ENCODE measurements at regions of chr1 and their contacts with region 1.

Region 1: GRCh38 chr1:204506961-204507387 is 9.2 kb upstream of the MDM4 start:
- DNase-seq: peak; percentile 91
- H3K4me3 ChIP-seq: peak overlapping the region; percentile 74
- H3K27ac ChIP-seq: peak overlapping the region; percentile 88
- H3K4me1 ChIP-seq: peaks cover 4% of the 10 kb centered on the region; the same call in 1 of the 2 replicates
- H3K27me3 ChIP-seq: no peaks in the 10 kb centered on the region

Region 2: GRCh38 chr1:204080163-204080903 is 426.6 kb before region 1 on chr1:
- in situ Hi-C with region 1: no loop called
- DNase-seq: peak; percentile 89
- H3K4me3 ChIP-seq: 0 out of 2 replicates have a peak overlapping the region, but pooled peaks have one; percentile 43
- H3K27ac ChIP-seq: no peak overlapping the region
- H3K4me1 ChIP-seq: peaks cover 23% of the 10 kb centered on the region
- H3K27me3 ChIP-seq: no peaks in the 10 kb centered on the region

Region 3: DNA sequence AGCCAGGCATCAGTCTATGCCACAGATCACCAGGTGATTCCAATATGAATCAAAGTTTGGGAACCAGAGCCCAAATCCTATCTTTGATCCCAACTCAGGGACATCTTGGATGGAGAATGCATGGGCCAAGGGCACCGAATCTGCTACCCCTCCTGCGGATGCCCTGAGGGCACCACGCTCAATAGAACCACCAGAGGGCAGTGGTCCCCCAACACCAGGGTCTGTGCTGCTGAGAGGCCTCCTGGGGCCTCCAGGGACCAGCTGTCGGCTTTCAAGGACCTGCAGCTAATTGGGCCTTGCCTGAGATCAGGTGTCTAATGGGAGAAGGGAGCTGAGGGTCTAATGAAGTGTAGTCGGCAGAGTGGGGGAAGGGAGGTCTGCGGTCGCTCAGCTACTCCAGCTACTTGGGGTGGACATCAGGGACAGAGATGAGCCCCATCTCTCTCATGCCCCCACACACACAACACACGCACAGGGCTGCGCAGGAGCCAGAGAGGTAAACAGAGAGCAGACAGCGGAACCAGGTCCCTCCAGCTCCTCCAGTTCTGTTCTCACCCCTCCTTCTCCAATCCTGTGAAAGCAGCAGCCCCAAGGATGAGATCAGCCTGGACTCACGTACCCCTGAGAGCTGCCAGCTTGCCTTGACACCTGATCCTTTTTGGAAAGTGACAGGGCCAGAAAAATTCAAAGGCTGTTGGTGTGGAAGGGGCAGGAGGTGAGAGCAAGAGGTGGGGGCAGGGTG is 60.4 kb before region 1 on chr1:
- in situ Hi-C with region 1: loop called (anchors 10 kb)
- DNase-seq: peak; percentile 74
- H3K4me3 ChIP-seq: no peak overlapping the region
- H3K27ac ChIP-seq: no peak overlapping the region
- H3K4me1 ChIP-seq: no peaks in the 10 kb centered on the region
- H3K27me3 ChIP-seq: no peaks in the 10 kb centered on the region